Posterior cingulate gyrus (tissue), 11 donors: ENCODE measurements at regions of chr2 and their contacts with region 1.

Region 1: GRCh38 chr2:86440631-86441391 is at the start of gene KDM3A:
- DNase-seq: peak; percentile 97 to 100 (median 99)

Region 2: GRCh38 chr2:86195055-86195807 is 245.6 kb before region 1 on chr2 and contains the start of gene IMMT:
- intact Hi-C with region 1: loop called (anchors 5 kb)
- DNase-seq: peak; percentile 91 to 100 (median 96)

Region 3: DNA sequence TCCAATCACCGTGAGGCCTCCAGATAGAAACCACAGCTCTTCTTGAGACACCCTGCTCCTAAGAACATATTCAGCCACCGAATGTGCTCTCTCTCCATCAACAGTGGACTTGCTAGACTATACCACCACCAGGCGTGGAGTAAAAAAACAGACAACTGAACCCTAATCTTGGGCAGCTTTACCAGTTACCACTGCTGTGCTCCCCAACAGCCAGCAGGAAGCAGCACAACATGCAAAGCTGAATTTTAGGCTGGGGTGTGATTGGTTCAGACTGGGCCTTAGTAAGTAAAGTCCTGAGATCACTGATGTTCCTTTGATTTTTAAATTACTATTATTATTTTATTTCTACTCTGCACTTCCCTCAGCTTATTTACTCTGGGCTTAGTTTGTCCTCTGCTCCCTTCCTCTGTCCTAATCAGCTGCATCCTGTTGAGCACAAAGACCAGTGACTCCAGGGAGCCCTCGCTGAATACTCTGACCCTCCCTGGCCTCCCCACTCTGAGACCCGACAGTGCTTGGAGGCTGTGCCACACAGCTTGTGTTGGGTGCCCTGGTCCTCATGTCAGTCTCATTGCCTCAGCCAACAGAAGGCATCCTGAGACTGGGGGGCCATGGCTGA is 219.6 kb before region 1 on chr2:
- intact Hi-C with region 1: loop called (anchors 10 kb)
- DNase-seq: peak in 7 of 10 donors; percentile 31 to 94 (median 61)

Region 4: GRCh38 chr2:86476092-86476491 is 35.3 kb after region 1 on chr2:
- intact Hi-C with region 1: loop called (anchors 2 kb)
- DNase-seq: no peak

Region 5: GRCh38 chr2:86552889-86553288 is 112.1 kb after region 1 on chr2:
- intact Hi-C with region 1: no loop called
- DNase-seq: no peak

Region 6: GRCh38 chr2:86562922-86563649 is 122.3 kb after region 1 on chr2 and contains the start of gene CHMP3:
- intact Hi-C with region 1: loop called (anchors 10 kb)
- DNase-seq: peak; percentile 89 to 99 (median 94)

Region 7: GRCh38 chr2:86623651-86624541 is 183.1 kb after region 1 on chr2 and contains the start of gene RNF103:
- intact Hi-C with region 1: loop called (anchors 5 kb)
- DNase-seq: peak; percentile 94 to 100 (median 98)

Region 8: DNA sequence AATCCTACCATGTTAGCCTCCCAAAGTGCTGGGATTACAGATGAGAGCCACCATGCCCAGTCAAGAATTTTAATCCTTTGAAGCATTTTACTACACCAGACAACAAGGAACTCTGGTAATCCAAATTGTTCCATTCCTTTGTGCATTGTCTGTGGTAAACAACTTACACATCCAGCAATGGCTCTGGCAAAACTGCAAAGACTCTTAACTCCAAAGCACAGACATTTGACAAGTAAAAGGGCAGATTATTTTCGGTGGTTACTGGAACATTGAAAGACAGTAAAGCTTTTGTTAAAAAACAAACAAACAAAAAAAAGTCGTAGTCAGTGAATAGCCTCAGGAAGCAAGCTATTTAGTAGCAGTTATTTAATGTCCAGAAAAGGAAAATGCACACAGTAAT is 246.1 kb after region 1 on chr2:
- intact Hi-C with region 1: loop called (anchors 10 kb)
- DNase-seq: no peak